HCT116 (cell line): ENCODE measurements at regions of chr1 and their contacts with region 1.

Region 1: DNA sequence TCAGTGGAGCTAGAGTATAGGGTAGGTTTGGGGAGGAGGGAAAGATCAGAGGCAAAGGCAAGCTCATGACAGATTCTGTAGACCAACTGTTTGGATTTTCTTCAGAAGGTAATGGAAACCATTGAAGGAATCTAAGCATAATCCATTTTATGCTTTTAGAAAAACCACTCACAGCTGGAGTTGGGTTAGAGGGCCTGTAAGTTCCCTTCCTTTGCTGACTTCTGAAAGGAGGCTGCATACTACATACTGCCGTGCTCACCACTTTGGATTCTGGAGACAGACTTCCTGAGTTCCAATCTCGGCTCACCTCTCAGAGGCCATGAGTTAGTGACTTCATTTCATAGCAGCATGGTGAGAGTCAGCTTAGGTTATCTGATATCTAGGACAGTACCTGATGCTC is 6.4 kb upstream of the SYT2 start:
- DNase-seq: no peak
- ATAC-seq: no peak
- H3K4me3 ChIP-seq: no peak overlapping the region
- H3K27ac ChIP-seq: no peak overlapping the region
- H3K4me1 ChIP-seq: no peaks in the 10 kb centered on the region
- H3K27me3 ChIP-seq: peaks cover 9% of the 10 kb centered on the region; the same call in 1 of the 2 replicates
- CTCF ChIP-seq: no peak
- POLR2A ChIP-seq: no peak
- RAD21 ChIP-seq: no peak

Region 2: GRCh38 chr1:202154766-202155477 is 561.7 kb before region 1 on chr1:
- CTCF ChIA-PET with region 1: interaction called, 11 read pairs
- POLR2A ChIA-PET with region 1: no interaction called
- RAD21 ChIA-PET with region 1: no interaction called
- intact Hi-C with region 1: no loop called
- DNase-seq: peak; percentile 76
- ATAC-seq: peak; percentile 94
- H3K4me3 ChIP-seq: no peak overlapping the region
- H3K27ac ChIP-seq: no peak overlapping the region
- H3K4me1 ChIP-seq: peaks cover 10 to 16% of the 10 kb centered on the region in 2 experiments; a peak in 3 of 4 replicates
- H3K27me3 ChIP-seq: no peaks in the 10 kb centered on the region
- CTCF ChIP-seq: peak; percentile 53 to 82 (median 70); a peak in 5 of 6 replicates
- POLR2A ChIP-seq: no peak
- RAD21 ChIP-seq: peak; percentile 64

Region 3: DNA sequence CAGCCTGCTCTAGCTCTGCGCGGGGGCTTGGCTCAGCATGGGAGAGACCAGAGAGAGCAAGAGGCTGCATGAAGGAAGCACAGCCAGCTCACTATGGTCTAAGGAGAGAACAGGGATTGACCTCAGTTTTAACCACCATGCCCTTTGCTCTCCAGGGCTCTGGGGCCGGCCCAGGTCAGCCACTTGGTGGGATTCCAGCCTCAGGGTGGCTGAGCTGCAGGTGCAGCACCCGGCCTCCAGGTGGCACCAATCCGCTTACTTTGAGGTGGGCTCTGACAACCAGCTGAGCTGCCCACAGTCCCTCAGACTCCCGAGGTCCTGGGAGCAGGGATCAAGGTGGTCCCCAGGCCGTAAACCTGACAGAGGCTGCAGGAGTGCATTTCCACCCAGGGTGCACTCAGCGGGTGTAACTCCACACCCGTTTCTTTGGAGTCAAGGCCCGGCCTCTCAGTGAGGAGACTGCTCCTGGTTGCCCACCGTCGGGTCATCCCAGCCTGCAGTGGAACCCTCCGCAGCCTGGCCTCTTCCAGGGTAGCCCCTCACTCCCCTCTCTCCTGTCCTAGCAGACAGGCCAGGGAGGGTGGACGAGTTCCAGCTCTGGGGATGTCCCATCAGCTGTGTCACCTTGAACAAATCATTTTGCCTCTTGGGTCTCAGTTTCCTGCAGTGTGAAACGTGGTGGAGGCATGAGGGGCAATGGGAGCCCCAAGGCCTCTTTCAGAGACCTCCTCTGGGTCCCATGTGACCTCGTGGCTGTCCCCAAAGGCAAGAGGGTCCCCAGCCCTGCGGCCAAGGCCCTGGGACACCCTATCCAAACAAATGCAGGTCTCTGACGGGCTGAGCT is 523.7 kb before region 1 on chr1:
- CTCF ChIA-PET with region 1: interaction called, 11 read pairs
- POLR2A ChIA-PET with region 1: no interaction called
- RAD21 ChIA-PET with region 1: interaction called in 1 of 2 experiments, 3 read pairs
- intact Hi-C with region 1: no loop called
- DNase-seq: no peak
- ATAC-seq: peak; percentile 67
- H3K4me3 ChIP-seq: no peak overlapping the region
- H3K27ac ChIP-seq: no peak overlapping the region
- H3K4me1 ChIP-seq: no peaks in the 10 kb centered on the region
- H3K27me3 ChIP-seq: no peaks in the 10 kb centered on the region; the same call in 1 of the 2 replicates
- CTCF ChIP-seq: peak; percentile 83 to 96 (median 90)
- POLR2A ChIP-seq: no peak
- RAD21 ChIP-seq: peak; percentile 88

Region 4: GRCh38 chr1:202501281-202501680 is 215.4 kb before region 1 on chr1:
- CTCF ChIA-PET with region 1: interaction called, 15 read pairs
- POLR2A ChIA-PET with region 1: no interaction called
- RAD21 ChIA-PET with region 1: interaction called, 6 read pairs
- intact Hi-C with region 1: loop called (anchors 10 kb)
- DNase-seq: peak; percentile 12
- ATAC-seq: peak; percentile 75
- H3K4me3 ChIP-seq: no peak overlapping the region
- H3K27ac ChIP-seq: no peak overlapping the region
- H3K4me1 ChIP-seq: no peaks in the 10 kb centered on the region
- H3K27me3 ChIP-seq: no peaks in the 10 kb centered on the region
- CTCF ChIP-seq: peak; percentile 32 to 75 (median 54)
- POLR2A ChIP-seq: no peak
- RAD21 ChIP-seq: peak; percentile 78

Region 5: DNA sequence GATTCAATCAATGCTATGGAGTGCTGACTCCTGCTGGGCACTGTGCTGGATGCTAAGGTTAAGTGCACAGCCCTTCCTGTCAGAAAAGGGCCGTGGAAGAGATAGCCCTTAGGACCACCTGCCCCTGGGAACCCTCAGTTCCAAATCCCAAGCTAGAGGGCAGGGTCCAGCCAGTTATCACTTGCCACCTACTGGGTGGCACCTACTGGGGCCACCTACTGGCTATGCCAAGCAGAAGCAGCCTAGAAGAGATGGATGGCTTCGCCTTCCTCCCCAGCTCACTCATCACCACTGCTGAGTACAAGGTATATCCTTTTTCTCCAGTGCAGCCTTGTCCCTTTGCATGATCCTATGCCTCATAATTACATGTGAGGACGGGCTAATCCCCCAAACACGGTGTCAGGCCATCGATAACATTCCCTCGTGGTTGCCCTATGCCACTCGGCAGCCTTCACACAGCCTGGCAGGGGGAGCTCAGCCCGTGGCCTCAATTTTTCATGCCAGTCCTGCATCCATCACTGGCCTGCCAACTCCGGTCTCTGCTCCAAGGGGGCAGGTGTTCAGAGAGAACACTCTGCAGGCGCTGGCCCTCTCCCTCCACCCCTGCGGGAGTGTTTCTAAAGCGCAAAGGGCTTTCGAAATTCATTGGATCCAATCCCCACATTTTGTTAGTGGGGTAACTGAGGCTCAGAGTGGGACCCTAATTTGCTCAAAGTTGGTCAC is 55.4 kb before region 1 on chr1:
- CTCF ChIA-PET with region 1: interaction called, 12 read pairs
- POLR2A ChIA-PET with region 1: no interaction called
- RAD21 ChIA-PET with region 1: interaction called in 1 of 2 experiments, 7 read pairs
- intact Hi-C with region 1: no loop called
- DNase-seq: peak; percentile 8
- ATAC-seq: peak; percentile 84
- H3K4me3 ChIP-seq: no peak overlapping the region
- H3K27ac ChIP-seq: no peak overlapping the region
- H3K4me1 ChIP-seq: no peaks in the 10 kb centered on the region
- H3K27me3 ChIP-seq: peaks cover 57% of the 10 kb centered on the region
- CTCF ChIP-seq: peak; percentile 55 to 93 (median 57)
- POLR2A ChIP-seq: no peak
- RAD21 ChIP-seq: peak; percentile 56